ENCODE measurements at regions of chr17 and their contacts with region 1.

Region 1: GRCh38 chr17:45135192-45135977 is at the start of gene ACBD4:
- DNase-seq: peak; percentile 83
- ATAC-seq: peak; percentile 76
- H3K4me3 ChIP-seq: peak within 1 kb of the TSS; percentile 59 to 67
- H3K27ac ChIP-seq: peak within 1 kb of the TSS; percentile 80
- H3K4me1 ChIP-seq: peaks cover 14% of the 10 kb centered on the region; the same call in 1 of the 2 replicates
- H3K27me3 ChIP-seq: no peaks in the 10 kb centered on the region
- CTCF ChIP-seq: peak; percentile 99
- total RNA-seq, gene ACBD4: 7.7 TPM

Region 2: GRCh38 chr17:44794851-44795413 is 340.5 kb before region 1 on chr17:
- CTCF ChIA-PET with region 1: no interaction called
- POLR2A ChIA-PET with region 1: no interaction called
- in situ Hi-C with region 1: no loop called
- intact Hi-C with region 1: no loop called
- DNase-seq: peak; percentile 92
- ATAC-seq: peak; percentile 80
- H3K4me3 ChIP-seq: peak overlapping the region in 1 of 2 experiments; percentile 16; a peak in 1 of 4 replicates
- H3K27ac ChIP-seq: peak overlapping the region; percentile 60
- H3K4me1 ChIP-seq: peaks cover 36% of the 10 kb centered on the region
- H3K27me3 ChIP-seq: no peaks in the 10 kb centered on the region
- CTCF ChIP-seq: no peak

Region 3: DNA sequence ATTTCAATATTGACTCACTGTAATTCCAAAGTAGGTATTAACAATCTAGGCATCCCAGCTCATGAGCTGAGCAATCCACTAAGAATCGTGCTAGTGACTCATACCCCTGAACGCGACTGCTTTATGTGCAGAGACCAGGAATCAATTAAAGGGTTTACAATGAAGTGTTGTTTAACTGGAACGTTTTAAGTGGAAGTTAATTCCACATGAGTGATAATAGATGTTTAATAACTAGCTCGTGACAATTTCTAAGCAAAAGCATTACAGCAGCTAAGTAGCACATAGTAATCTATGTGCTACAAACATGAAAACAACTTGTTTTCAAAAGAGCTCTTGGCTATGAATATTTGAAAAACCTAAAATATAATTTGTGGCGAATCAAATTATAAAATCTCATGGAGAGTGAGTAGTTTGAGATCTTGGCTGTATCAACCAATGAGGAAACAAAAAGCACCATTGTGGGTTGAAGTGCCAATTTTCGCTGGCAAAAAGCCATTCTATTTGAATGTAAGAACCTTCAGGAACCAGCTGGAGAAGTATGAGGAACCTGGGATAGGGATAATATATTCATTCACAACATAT is 314.7 kb before region 1 on chr17:
- CTCF ChIA-PET with region 1: no interaction called
- POLR2A ChIA-PET with region 1: no interaction called
- in situ Hi-C with region 1: no loop called
- intact Hi-C with region 1: no loop called
- DNase-seq: peak; percentile 78
- ATAC-seq: peak; percentile 91
- H3K4me3 ChIP-seq: peak overlapping the region; percentile 7 to 26; a peak in 3 of 4 replicates
- H3K27ac ChIP-seq: peak overlapping the region; percentile 90
- H3K4me1 ChIP-seq: peaks cover 28% of the 10 kb centered on the region
- H3K27me3 ChIP-seq: no peaks in the 10 kb centered on the region
- CTCF ChIP-seq: no peak

Region 4: GRCh38 chr17:45106096-45106495 is 29.3 kb before region 1 on chr17:
- CTCF ChIA-PET with region 1: interaction called, 11 read pairs
- POLR2A ChIA-PET with region 1: no interaction called
- in situ Hi-C with region 1: no loop called
- intact Hi-C with region 1: no loop called
- DNase-seq: no peak
- ATAC-seq: no peak
- H3K4me3 ChIP-seq: no peak overlapping the region
- H3K27ac ChIP-seq: no peak overlapping the region
- H3K4me1 ChIP-seq: peaks cover 10% of the 10 kb centered on the region
- H3K27me3 ChIP-seq: no peaks in the 10 kb centered on the region
- CTCF ChIP-seq: no peak

Region 5: GRCh38 chr17:45197555-45198334 is 62.4 kb after region 1 on chr17:
- CTCF ChIA-PET with region 1: interaction called, 58 read pairs
- POLR2A ChIA-PET with region 1: interaction called, 3 read pairs
- in situ Hi-C with region 1: no loop called
- intact Hi-C with region 1: loop called (anchors 1 kb)
- DNase-seq: peak; percentile 61
- ATAC-seq: peak; percentile 100
- H3K4me3 ChIP-seq: peak overlapping the region in 1 of 2 experiments; percentile 32; a peak in 2 of 4 replicates
- H3K27ac ChIP-seq: peak overlapping the region; percentile 88
- H3K4me1 ChIP-seq: peaks cover 18% of the 10 kb centered on the region
- H3K27me3 ChIP-seq: no peaks in the 10 kb centered on the region
- CTCF ChIP-seq: peak; percentile 97

Measured in Panc1 (cell line).